ENCODE measurements at regions of chr19 and their contacts with region 1.

Region 1: DNA sequence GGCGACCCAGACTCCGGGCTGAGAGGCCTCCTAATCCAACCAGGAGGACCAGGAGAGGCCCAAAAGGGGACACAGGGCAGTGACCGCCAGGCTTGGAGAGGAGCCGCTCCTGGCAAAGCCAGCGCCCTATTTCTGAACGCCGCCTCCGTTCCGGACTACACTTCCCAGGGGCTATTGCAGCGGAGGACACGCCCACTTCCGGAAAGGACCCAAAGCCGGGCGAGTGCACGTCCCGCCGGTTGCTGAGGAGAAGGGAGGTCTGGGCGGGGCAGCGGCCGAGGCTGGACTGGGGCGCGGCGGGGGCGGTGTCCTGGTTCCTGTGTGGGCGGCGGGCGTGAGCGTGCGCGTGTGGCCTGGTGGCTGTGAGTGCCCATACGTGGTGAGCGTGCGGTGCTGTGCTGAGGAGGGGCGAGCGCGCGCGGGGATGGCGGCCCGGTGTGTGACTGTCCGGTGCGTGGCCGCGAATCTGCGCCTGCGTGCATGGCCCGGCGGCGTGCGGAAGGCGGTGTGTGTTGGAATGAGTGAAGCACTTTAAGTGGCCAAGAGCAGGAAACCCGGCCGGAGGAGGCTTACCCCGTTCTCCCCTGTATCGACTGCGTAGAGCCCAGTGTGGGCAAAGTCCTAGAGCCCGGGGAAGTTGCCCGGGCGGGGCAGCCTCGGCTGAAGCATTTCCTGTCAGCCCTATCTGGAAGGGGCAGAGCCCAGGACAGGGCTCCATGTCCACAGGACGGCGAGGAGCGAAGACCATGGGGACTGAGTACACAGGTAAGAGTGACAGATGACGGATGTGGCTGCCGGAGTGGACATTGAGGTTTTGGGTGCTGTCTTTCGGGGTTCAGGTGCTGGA is at the start of gene ZNF470:
- DNase-seq: peak; percentile 94
- ATAC-seq: peak; percentile 97
- H3K4me3 Mint-ChIP-seq: peak within 1 kb of the TSS; percentile 88
- H3K27ac Mint-ChIP-seq: peak within 1 kb of the TSS; percentile 92
- H3K4me1 Mint-ChIP-seq: peaks cover 16% of the 10 kb centered on the region
- H3K27me3 Mint-ChIP-seq: no peaks in the 10 kb centered on the region
- total RNA-seq, gene ZNF470: 5.0 to 5.6 TPM

Region 2: GRCh38 chr19:56140583-56141416 is 426.7 kb before region 1 on chr19 and contains the start of gene ZNF444:
- CTCF ChIA-PET with region 1: no interaction called
- POLR2A ChIA-PET with region 1: no interaction called
- intact Hi-C with region 1: loop called in 1 of 2 experiments (anchors 1 kb)
- DNase-seq: peak; percentile 99
- ATAC-seq: peak; percentile 90
- H3K4me3 Mint-ChIP-seq: peak within 1 kb of the TSS; percentile 89
- H3K27ac Mint-ChIP-seq: peak within 1 kb of the TSS; percentile 94
- H3K4me1 Mint-ChIP-seq: peaks cover 31% of the 10 kb centered on the region
- H3K27me3 Mint-ChIP-seq: no peaks in the 10 kb centered on the region
- total RNA-seq, gene ZNF444: 29.2 to 32.2 TPM

Region 3: GRCh38 chr19:56477429-56478338 is 89.8 kb before region 1 on chr19:
- CTCF ChIA-PET with region 1: no interaction called
- POLR2A ChIA-PET with region 1: no interaction called
- intact Hi-C with region 1: loop called in 1 of 2 experiments (anchors 1 kb)
- DNase-seq: peak; percentile 86
- ATAC-seq: peak; percentile 87
- H3K4me3 Mint-ChIP-seq: peak overlapping the region; percentile 85
- H3K27ac Mint-ChIP-seq: peak overlapping the region; percentile 94
- H3K4me1 Mint-ChIP-seq: peaks cover 15% of the 10 kb centered on the region
- H3K27me3 Mint-ChIP-seq: peaks cover 13% of the 10 kb centered on the region

Region 4: DNA sequence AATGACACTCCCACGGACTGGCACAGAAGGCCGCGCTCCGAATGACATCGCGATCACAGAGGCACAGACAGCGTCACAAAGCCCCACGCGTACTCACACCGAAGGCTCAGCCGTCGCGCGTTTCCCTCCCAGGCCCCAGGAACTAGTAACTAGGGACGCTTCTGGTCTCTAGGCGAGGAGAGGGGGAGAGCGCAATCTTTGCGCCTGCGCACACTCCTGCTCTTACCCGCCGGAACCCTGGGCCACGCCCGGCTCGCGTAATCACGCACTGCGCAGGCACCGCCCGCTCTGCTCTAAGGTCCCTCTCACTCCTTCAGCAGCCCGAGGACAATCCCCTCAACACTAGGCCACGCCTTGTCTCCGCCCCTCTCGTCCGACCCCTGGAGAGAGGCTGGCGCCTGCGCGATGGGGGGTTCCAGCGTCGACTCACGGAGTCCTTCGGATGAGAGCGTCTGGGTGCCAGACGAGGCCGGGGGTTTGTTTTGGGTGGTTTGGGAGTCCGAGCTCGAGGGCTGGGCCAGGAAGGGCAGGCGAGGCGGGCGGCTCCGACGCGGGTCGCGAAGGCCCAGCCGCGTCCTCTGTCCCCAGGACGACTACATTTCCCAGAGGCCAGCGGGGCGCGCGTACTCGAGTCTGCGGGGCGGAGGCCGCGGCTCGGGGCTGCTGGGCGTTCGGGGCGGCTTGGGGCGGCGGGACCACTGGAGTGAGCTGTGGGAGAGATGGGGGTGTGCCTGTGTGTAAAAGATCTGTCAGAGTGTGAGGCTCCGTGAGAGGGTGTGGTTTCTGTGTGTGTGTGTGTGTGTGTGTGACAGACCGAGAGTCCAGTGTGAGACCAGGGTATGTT is 59.8 kb before region 1 on chr19 and contains the start of gene ZNF471:
- CTCF ChIA-PET with region 1: no interaction called
- POLR2A ChIA-PET with region 1: no interaction called
- intact Hi-C with region 1: loop called in 1 of 2 experiments (anchors 1 kb)
- DNase-seq: peak; percentile 96
- ATAC-seq: peak; percentile 99
- H3K4me3 Mint-ChIP-seq: no peak within 1 kb of the TSS
- H3K27ac Mint-ChIP-seq: peak within 1 kb of the TSS; percentile 12
- H3K4me1 Mint-ChIP-seq: peaks cover 5% of the 10 kb centered on the region
- H3K27me3 Mint-ChIP-seq: peaks cover 2% of the 10 kb centered on the region
- total RNA-seq, gene ZNF471: 1.4 to 1.5 TPM

Region 5: GRCh38 chr19:56554272-56554869 is 13.1 kb before region 1 on chr19:
- CTCF ChIA-PET with region 1: no interaction called
- POLR2A ChIA-PET with region 1: no interaction called
- intact Hi-C with region 1: no loop called
- DNase-seq: no peak
- ATAC-seq: no peak
- H3K4me3 Mint-ChIP-seq: no peak overlapping the region
- H3K27ac Mint-ChIP-seq: no peak overlapping the region
- H3K4me1 Mint-ChIP-seq: no peaks in the 10 kb centered on the region
- H3K27me3 Mint-ChIP-seq: no peaks in the 10 kb centered on the region

Region 6: GRCh38 chr19:56671613-56671994 is 104.1 kb after region 1 on chr19 and contains the start of gene ZNF835:
- CTCF ChIA-PET with region 1: no interaction called
- POLR2A ChIA-PET with region 1: no interaction called
- intact Hi-C with region 1: loop called in 1 of 2 experiments (anchors 1 kb)
- DNase-seq: peak; percentile 94
- ATAC-seq: peak; percentile 96
- H3K4me3 Mint-ChIP-seq: peak within 1 kb of the TSS; percentile 84
- H3K27ac Mint-ChIP-seq: peak within 1 kb of the TSS; percentile 87
- H3K4me1 Mint-ChIP-seq: peaks cover 11% of the 10 kb centered on the region
- H3K27me3 Mint-ChIP-seq: no peaks in the 10 kb centered on the region
- total RNA-seq, gene ZNF835: 2.8 to 4.5 TPM

Measured in activated CD4-positive, alpha-beta T cell treated with anti-CD3 and anti-CD28 coated beads for 36 hours (primary cell).